ENCODE measurements at regions of chr1 and their contacts with region 1.

Region 1: GRCh38 chr1:35298464-35298863 is 30.0 kb downstream of the ZMYM4 start:
- DNase-seq: peak in 7 of 9 donors; percentile 43 to 68 (median 60)
- ATAC-seq: peak; percentile 92
- H3K4me3 ChIP-seq: no peak overlapping the region
- H3K4me3 Mint-ChIP-seq: no peak overlapping the region
- H3K27ac ChIP-seq: no peak overlapping the region
- H3K27ac Mint-ChIP-seq: peak overlapping the region in 5 of 9 donors; percentile 26 to 72 (median 62)
- H3K4me1 ChIP-seq: no peaks in the 10 kb centered on the region
- H3K4me1 Mint-ChIP-seq: peaks cover 6 to 26% (median 14%) of the 10 kb centered on the region in 7 donors
- H3K27me3 ChIP-seq: no peaks in the 10 kb centered on the region
- H3K27me3 Mint-ChIP-seq: no peaks in the 10 kb centered on the region

Region 2: DNA sequence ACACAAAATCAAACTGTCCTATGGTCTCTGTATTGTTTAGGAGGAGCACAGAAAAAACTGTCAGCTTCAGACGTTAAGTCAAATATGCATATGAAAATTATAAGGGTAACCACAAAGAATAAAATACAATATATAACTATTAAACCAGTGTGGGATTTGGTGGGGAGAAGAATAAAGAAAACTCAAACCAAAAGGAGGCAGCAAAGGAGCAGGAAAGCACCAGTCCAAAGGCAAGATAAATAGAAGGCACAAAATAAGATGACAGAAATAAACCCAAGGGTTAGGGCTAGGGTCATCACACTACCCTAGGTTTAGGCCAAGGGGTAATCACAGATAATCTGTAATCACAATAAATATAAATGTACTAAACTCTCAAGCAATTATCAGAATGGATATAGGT is 401.9 kb before region 1 on chr1:
- CTCF ChIA-PET with region 1: no interaction called
- POLR2A ChIA-PET with region 1: interaction called, 12 read pairs
- intact Hi-C with region 1: no loop called
- DNase-seq: no peak
- ATAC-seq: no peak
- H3K4me3 ChIP-seq: no peak overlapping the region
- H3K4me3 Mint-ChIP-seq: no peak overlapping the region
- H3K27ac ChIP-seq: no peak overlapping the region
- H3K27ac Mint-ChIP-seq: no peak overlapping the region
- H3K4me1 ChIP-seq: no peaks in the 10 kb centered on the region
- H3K4me1 Mint-ChIP-seq: peaks cover 0 to 8% (median 0%) of the 10 kb centered on the region in 7 donors
- H3K27me3 ChIP-seq: no peaks in the 10 kb centered on the region
- H3K27me3 Mint-ChIP-seq: peaks cover 7 to 22% (median 18%) of the 10 kb centered on the region in 5 donors